Stomach (tissue), 19 donors: ENCODE measurements at regions of chr10 and their contacts with region 1.

Region 1: DNA sequence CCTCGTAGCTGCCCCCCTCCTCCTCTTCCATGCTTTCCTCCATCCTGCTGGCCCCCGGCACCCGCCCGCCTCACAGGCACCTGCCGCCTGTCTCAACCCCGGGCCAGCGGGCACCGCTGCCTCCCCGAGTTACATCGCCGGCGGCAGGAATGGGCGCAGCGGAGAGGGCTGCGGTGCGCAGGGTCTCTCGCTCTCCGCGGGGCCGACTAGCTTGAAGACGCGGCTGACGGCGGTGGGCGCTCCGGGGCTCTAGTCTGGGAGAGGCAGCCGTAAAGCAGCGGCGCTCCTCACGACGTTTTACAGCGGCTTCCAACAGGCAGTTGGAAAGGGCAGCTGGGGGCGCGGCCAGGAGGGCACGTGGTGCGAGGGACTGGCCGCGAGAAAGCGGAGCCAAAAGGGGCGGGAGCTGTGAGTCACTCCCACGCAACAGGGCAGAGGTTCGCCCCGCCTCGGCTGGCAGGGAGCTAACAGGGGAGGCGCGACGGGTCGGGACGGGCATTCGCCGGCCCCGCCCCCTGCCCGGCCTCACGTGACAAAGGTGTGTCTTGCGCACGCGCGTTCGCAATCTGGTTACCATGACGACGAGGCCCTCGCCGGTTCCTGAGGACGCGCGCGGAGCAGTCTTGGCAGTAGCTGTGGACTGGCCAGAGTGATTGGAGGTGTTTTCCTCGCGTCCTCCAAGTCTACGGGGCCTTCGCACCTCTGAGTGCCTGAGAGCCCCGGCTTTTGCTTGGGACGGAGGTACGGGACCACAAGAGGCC is at the start of gene CACUL1:
- DNase-seq: peak; percentile 100
- H3K4me3 ChIP-seq: peak within 1 kb of the TSS; percentile 74 to 96 (median 81)
- H3K27ac ChIP-seq: peak within 1 kb of the TSS; percentile 86 to 95 (median 89)
- H3K4me1 ChIP-seq: peaks cover 14 to 48% (median 39%) of the 10 kb centered on the region in 4 donors
- H3K27me3 ChIP-seq: no peaks in the 10 kb centered on the region
- CTCF ChIP-seq: no peak
- EP300 ChIP-seq: no peak
- POLR2A ChIP-seq: peak in 1 of 4 donors; percentile 34
- total RNA-seq, gene CACUL1: 17.4 to 76.9 (median 20.4) TPM

Region 2: DNA sequence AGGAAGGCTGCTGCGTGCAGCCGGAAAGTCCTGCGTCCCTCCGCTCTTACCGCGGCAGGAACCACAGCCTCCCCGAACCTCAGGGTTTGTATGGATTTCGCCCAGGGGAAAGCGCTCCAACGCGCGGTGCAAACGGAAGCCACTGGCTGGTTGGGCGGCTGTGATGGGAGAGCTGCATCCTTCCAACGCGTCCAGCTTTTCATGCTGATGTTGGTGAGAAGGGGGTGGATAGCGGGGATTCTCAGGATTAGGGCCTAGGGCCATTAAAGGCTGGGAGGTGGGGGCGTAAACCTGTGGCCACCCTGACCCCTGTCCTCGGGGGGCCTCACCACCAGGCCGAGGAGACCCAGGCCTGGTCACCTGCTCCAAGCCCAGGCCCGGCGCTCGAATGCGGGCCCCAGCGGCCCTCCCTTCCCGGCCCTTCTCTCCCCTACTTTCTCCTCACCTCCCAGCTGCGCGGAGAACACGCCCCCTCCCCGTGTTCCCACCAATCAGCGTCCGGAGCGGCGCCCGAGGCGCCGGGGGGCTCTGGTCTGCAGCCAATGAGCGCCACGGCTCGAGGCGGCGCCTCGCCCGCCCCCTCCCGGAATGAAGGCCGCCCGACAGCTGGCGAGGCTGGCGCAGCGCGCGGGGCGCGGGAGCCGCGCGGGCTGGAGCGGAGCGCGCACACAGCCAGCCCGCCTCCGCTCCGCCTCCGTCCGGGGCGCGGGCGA is 274.2 kb after region 1 on chr10:
- intact Hi-C with region 1: loop called (anchors 10 kb)
- DNase-seq: peak; percentile 89 to 96
- H3K4me3 ChIP-seq: peak overlapping the region; percentile 64 to 94 (median 74)
- H3K27ac ChIP-seq: peak overlapping the region; percentile 71 to 87 (median 77)
- H3K4me1 ChIP-seq: peaks cover 36 to 58% (median 52%) of the 10 kb centered on the region in 4 donors
- H3K27me3 ChIP-seq: no peaks in the 10 kb centered on the region
- CTCF ChIP-seq: peak in 1 of 7 experiments; percentile 39
- EP300 ChIP-seq: no peak
- POLR2A ChIP-seq: no peak